Activated T-helper 1 cell treated with anti-CD3 and anti-CD28 coated beads, Interleukin-12 subunit alpha, Interleukin-12 subunit beta, Interleukin-2, Interleukin-4 antibody, amounts not matched to agents 30 ng/mL and 10 ng/mL and 1 ng/mL, durations not matched to agents 14 hours and 24 hours and 36 hours (primary cell): ENCODE measurements at regions of chr5 and their contacts with region 1.

Region 1: DNA sequence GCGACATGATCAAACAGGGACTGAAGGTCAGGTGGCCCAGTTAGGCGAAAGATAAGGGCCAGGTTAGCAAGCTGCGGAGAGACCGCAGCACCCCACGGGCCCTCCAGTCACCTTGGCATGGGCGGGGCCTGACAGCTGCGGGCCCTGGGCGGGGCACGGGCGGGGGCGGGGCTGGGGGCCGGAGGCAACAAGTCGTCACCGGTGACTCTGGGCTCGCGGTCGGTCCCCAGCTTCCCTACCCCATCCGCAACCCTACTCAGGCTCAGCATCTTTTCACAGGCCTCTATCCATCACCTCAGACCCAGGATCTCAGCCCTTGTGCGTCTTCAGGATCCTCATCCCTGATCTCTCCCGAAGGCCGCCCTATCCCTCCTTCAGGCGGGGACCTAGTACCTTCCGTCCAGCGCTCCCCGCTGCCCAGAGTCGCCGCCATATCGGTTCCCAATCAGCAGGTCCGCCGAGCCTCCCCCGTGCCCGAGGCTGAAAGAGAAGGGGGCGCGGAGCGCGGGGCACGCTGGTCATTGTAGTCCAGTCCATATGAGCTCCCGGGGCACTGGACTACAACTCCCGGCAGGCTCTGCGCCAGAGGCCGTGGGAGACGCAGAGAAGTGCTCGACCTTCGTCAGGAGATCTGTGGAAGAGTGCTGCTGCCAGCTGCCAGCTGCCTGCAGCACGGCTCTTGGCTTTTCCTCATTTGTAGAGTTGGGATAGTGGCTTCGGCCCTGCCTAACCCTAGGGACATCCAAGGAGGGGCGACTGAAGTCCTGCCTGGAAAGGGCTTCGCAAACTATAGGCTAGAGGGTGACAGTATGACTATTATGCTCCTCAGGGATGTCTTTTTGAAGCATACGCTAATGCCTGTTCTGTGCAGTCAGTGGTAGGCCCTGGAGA is at the start of gene DNAJC18:
- DNase-seq: peak; percentile 86
- H3K4me3 Mint-ChIP-seq: peak within 1 kb of the TSS; percentile 95
- H3K27ac Mint-ChIP-seq: peak within 1 kb of the TSS; percentile 99
- H3K4me1 Mint-ChIP-seq: peaks cover 66% of the 10 kb centered on the region
- H3K27me3 Mint-ChIP-seq: no peaks in the 10 kb centered on the region
- total RNA-seq, gene DNAJC18: 30.0 and 36.3 TPM in 2 replicates

Region 2: GRCh38 chr5:139458580-139459406 is 19.5 kb after region 1 on chr5:
- intact Hi-C with region 1: loop called (anchors 1 kb)
- DNase-seq: peak; percentile 80
- H3K4me3 Mint-ChIP-seq: peak overlapping the region; percentile 81
- H3K27ac Mint-ChIP-seq: peak overlapping the region; percentile 99
- H3K4me1 Mint-ChIP-seq: peaks cover 72% of the 10 kb centered on the region
- H3K27me3 Mint-ChIP-seq: no peaks in the 10 kb centered on the region

Region 3: GRCh38 chr5:140391312-140391711 is 952.1 kb after region 1 on chr5:
- intact Hi-C with region 1: no loop called
- DNase-seq: no peak
- H3K4me3 Mint-ChIP-seq: no peak overlapping the region
- H3K27ac Mint-ChIP-seq: no peak overlapping the region
- H3K4me1 Mint-ChIP-seq: no peaks in the 10 kb centered on the region
- H3K27me3 Mint-ChIP-seq: no peaks in the 10 kb centered on the region